Activated CD8-positive, alpha-beta T cell treated with anti-CD3 and anti-CD28 coated beads for 36 hours (primary cell): ENCODE measurements at regions of chr14 and their contacts with region 1.

Region 1: GRCh38 chr14:72962829-72963312 is 36.6 kb downstream of the DCAF4 start:
- DNase-seq: peak; percentile 31
- ATAC-seq: peak; percentile 14
- H3K4me3 Mint-ChIP-seq: no peak overlapping the region
- H3K27ac Mint-ChIP-seq: no peak overlapping the region
- H3K4me1 Mint-ChIP-seq: peaks cover 18% of the 10 kb centered on the region
- H3K27me3 Mint-ChIP-seq: no peaks in the 10 kb centered on the region
- CTCF ChIP-seq: no peak

Region 2: GRCh38 chr14:72948481-72949138 is 14.3 kb before region 1 on chr14:
- CTCF ChIA-PET with region 1: interaction called, 17 read pairs
- POLR2A ChIA-PET with region 1: interaction called, 5 read pairs
- intact Hi-C with region 1: no loop called
- DNase-seq: peak; percentile 85
- ATAC-seq: no peak
- H3K4me3 Mint-ChIP-seq: no peak overlapping the region
- H3K27ac Mint-ChIP-seq: no peak overlapping the region
- H3K4me1 Mint-ChIP-seq: peaks cover 14% of the 10 kb centered on the region
- H3K27me3 Mint-ChIP-seq: no peaks in the 10 kb centered on the region
- CTCF ChIP-seq: peak; percentile 91